ENCODE measurements at regions of chr1 and their contacts with region 1.

Region 1: GRCh38 chr1:1100296-1100695 is 15.6 kb downstream of the C1orf159 start:
- DNase-seq: no peak
- ATAC-seq: no peak
- H3K4me3 ChIP-seq: no peak overlapping the region
- H3K27ac ChIP-seq: no peak overlapping the region
- H3K4me1 ChIP-seq: no peaks in the 10 kb centered on the region
- H3K27me3 ChIP-seq: no peaks in the 10 kb centered on the region
- CTCF ChIP-seq: no peak
- EP300 ChIP-seq: no peak
- POLR2A ChIP-seq: no peak
- RAD21 ChIP-seq: no peak

Region 2: DNA sequence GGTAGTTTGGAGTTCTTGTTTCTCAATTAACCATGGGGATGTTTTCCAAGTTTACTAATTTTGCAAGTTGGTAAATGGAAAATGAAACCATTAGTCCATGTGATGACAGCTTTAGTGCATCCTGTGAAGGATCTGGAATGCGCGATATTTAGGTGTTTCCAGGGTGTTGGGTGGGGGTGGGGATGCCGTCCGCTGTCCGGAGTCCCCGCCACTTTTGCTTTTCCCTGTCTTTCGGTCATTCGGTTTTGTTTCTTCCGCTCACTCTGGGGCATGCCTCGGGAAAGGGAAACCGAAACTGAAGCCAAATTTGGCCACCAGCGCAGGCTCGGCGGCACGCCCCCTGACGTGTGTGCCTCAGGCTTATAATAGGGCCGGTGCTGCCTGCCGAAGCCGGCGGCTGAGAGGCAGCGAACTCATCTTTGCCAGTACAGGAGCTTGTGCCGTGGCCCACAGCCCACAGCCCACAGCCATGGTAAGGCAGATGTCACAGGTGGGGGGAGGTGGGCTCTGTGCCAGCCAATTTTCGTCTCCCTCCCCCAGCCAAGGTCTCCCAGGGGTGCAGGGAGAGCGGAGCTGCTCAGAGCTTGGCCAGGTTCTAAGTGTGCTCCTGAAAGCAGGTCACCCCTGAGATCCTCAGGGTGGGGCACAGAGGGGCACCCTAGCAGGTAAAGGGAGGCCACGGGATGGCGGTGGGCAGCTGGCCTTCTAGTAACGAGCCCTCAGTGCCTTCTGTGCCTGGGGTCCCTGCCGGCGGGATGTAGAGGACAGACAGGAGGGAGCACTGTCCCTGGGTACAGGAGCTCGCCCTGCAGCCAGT is 87.0 kb before region 1 on chr1 and contains the start of gene ISG15:
- CTCF ChIA-PET with region 1: no interaction called
- POLR2A ChIA-PET with region 1: no interaction called
- RAD21 ChIA-PET with region 1: no interaction called
- SMC1A ChIA-PET with region 1: no interaction called
- in situ Hi-C with region 1: no loop called
- intact Hi-C with region 1: no loop called
- DNase-seq: peak; percentile 79
- ATAC-seq: peak; percentile 91
- H3K4me3 ChIP-seq: peak within 1 kb of the TSS; percentile 90
- H3K27ac ChIP-seq: peak within 1 kb of the TSS; percentile 92
- H3K4me1 ChIP-seq: peaks cover 12% of the 10 kb centered on the region
- H3K27me3 ChIP-seq: no peaks in the 10 kb centered on the region
- CTCF ChIP-seq: no peak
- EP300 ChIP-seq: peak in 1 of 2 experiments; percentile 39; a peak in 1 of 4 replicates
- POLR2A ChIP-seq: peak; percentile 81
- RAD21 ChIP-seq: no peak
- polyA plus RNA-seq, gene ISG15: 68.9 to 126 TPM

Region 3: GRCh38 chr1:1050577-1051052 is 49.7 kb before region 1 on chr1:
- CTCF ChIA-PET with region 1: no interaction called
- POLR2A ChIA-PET with region 1: no interaction called
- RAD21 ChIA-PET with region 1: no interaction called
- SMC1A ChIA-PET with region 1: no interaction called
- in situ Hi-C with region 1: loop called (anchors 5 kb)
- intact Hi-C with region 1: no loop called
- DNase-seq: no peak
- ATAC-seq: peak; percentile 90
- H3K4me3 ChIP-seq: no peak overlapping the region
- H3K27ac ChIP-seq: no peak overlapping the region
- H3K4me1 ChIP-seq: peaks cover 5% of the 10 kb centered on the region; the same call in 1 of the 2 replicates
- H3K27me3 ChIP-seq: no peaks in the 10 kb centered on the region
- CTCF ChIP-seq: no peak
- EP300 ChIP-seq: no peak
- POLR2A ChIP-seq: no peak
- RAD21 ChIP-seq: no peak

Region 4: GRCh38 chr1:1360506-1361169 is 260.3 kb after region 1 on chr1:
- CTCF ChIA-PET with region 1: no interaction called
- POLR2A ChIA-PET with region 1: no interaction called
- RAD21 ChIA-PET with region 1: no interaction called
- SMC1A ChIA-PET with region 1: no interaction called
- in situ Hi-C with region 1: no loop called
- intact Hi-C with region 1: no loop called
- DNase-seq: no peak
- ATAC-seq: no peak
- H3K4me3 ChIP-seq: no peak overlapping the region
- H3K27ac ChIP-seq: no peak overlapping the region
- H3K4me1 ChIP-seq: peaks cover 5% of the 10 kb centered on the region
- H3K27me3 ChIP-seq: no peaks in the 10 kb centered on the region
- CTCF ChIP-seq: no peak
- EP300 ChIP-seq: no peak
- POLR2A ChIP-seq: no peak
- RAD21 ChIP-seq: no peak